Naive thymus-derived CD4-positive, alpha-beta T cell (primary cell): ENCODE measurements at regions of chr3 and their contacts with region 1.

Region 1: DNA sequence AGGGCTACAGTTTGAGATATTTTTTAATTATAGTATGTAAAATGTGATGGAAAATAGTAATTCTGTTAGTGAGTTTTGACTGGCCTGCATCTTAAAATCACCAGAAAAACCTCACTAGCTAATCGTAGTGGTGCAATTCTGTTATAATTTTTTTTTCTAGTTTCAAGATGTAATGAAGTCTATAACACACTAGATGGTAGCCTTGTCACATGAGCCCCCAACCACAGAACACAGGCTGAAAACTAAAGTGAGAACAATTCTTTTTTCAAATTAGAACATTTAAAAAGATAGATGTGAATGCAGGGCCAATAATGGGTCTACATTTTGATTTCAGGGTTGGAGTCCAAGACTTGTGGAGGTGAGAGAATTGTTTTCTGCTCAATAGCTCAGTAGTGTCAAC is 83.3 kb upstream of the KCNH8 start:
- DNase-seq: peak in 3 of 9 donors; percentile 12 to 24 (median 17)
- ATAC-seq: no peak
- H3K4me3 ChIP-seq: no peak overlapping the region
- H3K4me3 Mint-ChIP-seq: no peak overlapping the region
- H3K27ac ChIP-seq: no peak overlapping the region
- H3K27ac Mint-ChIP-seq: no peak overlapping the region
- H3K4me1 ChIP-seq: no peaks in the 10 kb centered on the region
- H3K4me1 Mint-ChIP-seq: no peaks in the 10 kb centered on the region
- H3K27me3 ChIP-seq: no peaks in the 10 kb centered on the region
- H3K27me3 Mint-ChIP-seq: peaks cover 0 to 6% (median 0%) of the 10 kb centered on the region in 5 donors

Region 2: GRCh38 chr3:19146685-19147650 is 81.9 kb after region 1 on chr3:
- CTCF ChIA-PET with region 1: interaction called, 5 read pairs
- POLR2A ChIA-PET with region 1: interaction called, 3 read pairs
- intact Hi-C with region 1: loop called in 1 of 2 experiments (anchors 1 kb)
- DNase-seq: peak; percentile 25 to 88 (median 61)
- ATAC-seq: peak; percentile 75
- H3K4me3 ChIP-seq: peak overlapping the region; percentile 72
- H3K4me3 Mint-ChIP-seq: peak overlapping the region; percentile 90 to 95 (median 93)
- H3K27ac ChIP-seq: peak overlapping the region; percentile 59
- H3K27ac Mint-ChIP-seq: peak overlapping the region; percentile 25 to 94 (median 84)
- H3K4me1 ChIP-seq: peaks cover 3 to 17% of the 10 kb centered on the region in 2 donors
- H3K4me1 Mint-ChIP-seq: peaks cover 8 to 28% (median 21%) of the 10 kb centered on the region in 7 donors
- H3K27me3 ChIP-seq: no peaks in the 10 kb centered on the region
- H3K27me3 Mint-ChIP-seq: peaks cover 40 to 63% (median 53%) of the 10 kb centered on the region in 5 donors

Region 3: DNA sequence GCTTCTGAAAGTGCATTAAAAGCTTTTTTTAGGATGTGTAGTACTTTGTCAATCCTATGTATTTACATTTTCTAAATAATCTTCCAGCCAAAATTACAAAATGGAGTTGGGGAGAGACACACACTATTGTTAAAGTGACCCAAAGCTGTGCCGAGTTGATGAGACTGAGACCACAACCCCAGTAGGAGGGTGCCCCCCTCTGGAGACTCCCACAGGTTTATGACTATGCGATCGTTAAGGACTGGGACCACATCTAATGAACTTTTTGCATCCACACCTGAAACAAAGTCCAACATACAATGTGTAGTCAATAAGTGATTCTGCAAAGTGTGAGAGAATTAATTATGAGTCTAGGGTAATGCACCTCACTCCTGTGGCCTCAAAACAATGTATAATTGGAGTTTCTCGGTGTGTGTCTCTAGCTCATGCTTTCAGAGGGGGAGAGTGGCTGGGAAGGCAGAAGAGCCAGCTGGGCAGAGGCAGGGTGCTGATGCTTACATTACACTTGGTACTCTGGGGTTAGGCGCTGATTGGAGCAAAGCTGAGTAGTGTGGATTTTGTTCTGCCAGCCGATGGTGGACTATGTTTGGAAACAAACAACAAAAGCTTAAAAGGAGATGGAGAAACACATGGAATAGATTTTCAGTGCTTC is 186.1 kb after region 1 on chr3:
- CTCF ChIA-PET with region 1: no interaction called
- POLR2A ChIA-PET with region 1: no interaction called
- intact Hi-C with region 1: loop called in 1 of 2 experiments (anchors 1 kb)
- DNase-seq: no peak
- ATAC-seq: no peak
- H3K4me3 ChIP-seq: no peak overlapping the region
- H3K4me3 Mint-ChIP-seq: no peak overlapping the region
- H3K27ac ChIP-seq: no peak overlapping the region
- H3K27ac Mint-ChIP-seq: no peak overlapping the region
- H3K4me1 ChIP-seq: no peaks in the 10 kb centered on the region
- H3K4me1 Mint-ChIP-seq: peaks cover 0 to 8% (median 5%) of the 10 kb centered on the region in 7 donors
- H3K27me3 ChIP-seq: no peaks in the 10 kb centered on the region
- H3K27me3 Mint-ChIP-seq: peaks cover 0 to 9% (median 0%) of the 10 kb centered on the region in 5 donors

Region 4: GRCh38 chr3:19348929-19349564 is 284.0 kb after region 1 on chr3:
- CTCF ChIA-PET with region 1: no interaction called
- POLR2A ChIA-PET with region 1: no interaction called
- intact Hi-C with region 1: loop called in 1 of 2 experiments (anchors 1 kb)
- DNase-seq: peak in 3 of 9 donors; percentile 2 to 8 (median 2)
- ATAC-seq: peak; percentile 65
- H3K4me3 ChIP-seq: no peak overlapping the region
- H3K4me3 Mint-ChIP-seq: no peak overlapping the region
- H3K27ac ChIP-seq: no peak overlapping the region
- H3K27ac Mint-ChIP-seq: no peak overlapping the region
- H3K4me1 ChIP-seq: no peaks in the 10 kb centered on the region
- H3K4me1 Mint-ChIP-seq: no peaks in the 10 kb centered on the region
- H3K27me3 ChIP-seq: no peaks in the 10 kb centered on the region
- H3K27me3 Mint-ChIP-seq: peaks cover 0 to 12% (median 3%) of the 10 kb centered on the region in 5 donors

Region 5: DNA sequence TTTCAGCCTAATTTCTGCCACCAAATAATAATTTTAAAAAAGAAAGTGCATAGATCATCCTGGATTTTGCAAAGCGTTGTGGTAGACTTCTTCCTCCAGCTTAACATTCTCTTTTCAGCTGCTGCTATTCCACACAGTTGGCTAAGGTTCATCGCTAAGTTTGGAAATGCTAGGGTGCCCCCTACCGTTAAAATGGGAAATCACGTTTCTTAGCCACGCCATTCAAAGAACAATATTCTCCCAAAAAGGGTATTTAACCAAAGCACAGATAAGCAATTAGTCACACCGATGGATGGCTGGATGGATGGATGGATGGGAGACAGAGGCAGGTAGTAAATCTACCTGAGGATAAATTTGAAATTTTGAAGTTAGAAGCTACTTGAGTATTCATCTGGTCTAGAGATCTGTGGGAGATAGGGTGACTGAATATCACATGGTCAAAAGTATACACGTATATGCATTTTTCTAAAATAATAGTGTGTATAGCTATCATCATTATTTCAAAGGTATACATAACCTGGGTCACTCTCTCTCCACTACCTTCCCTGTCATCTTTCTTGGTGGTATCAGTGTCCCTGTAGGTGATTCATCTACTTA is 801.8 kb after region 1 on chr3:
- CTCF ChIA-PET with region 1: interaction called, 26 read pairs
- POLR2A ChIA-PET with region 1: no interaction called
- intact Hi-C with region 1: loop called in 1 of 2 experiments (anchors 5 kb)
- DNase-seq: peak in 6 of 9 donors; percentile 26 to 56 (median 33)
- ATAC-seq: peak; percentile 52
- H3K4me3 ChIP-seq: no peak overlapping the region
- H3K4me3 Mint-ChIP-seq: no peak overlapping the region
- H3K27ac ChIP-seq: no peak overlapping the region
- H3K27ac Mint-ChIP-seq: no peak overlapping the region
- H3K4me1 ChIP-seq: no peaks in the 10 kb centered on the region
- H3K4me1 Mint-ChIP-seq: peaks cover 0 to 4% (median 0%) of the 10 kb centered on the region in 7 donors
- H3K27me3 ChIP-seq: peaks cover 0 to 4% of the 10 kb centered on the region in 2 donors
- H3K27me3 Mint-ChIP-seq: peaks cover 14 to 24% (median 15%) of the 10 kb centered on the region in 5 donors